Activated CD4-positive, alpha-beta memory T cell treated with anti-CD3 and anti-CD28 coated beads, Interleukin-2, amount 10 ng/mL, durations not matched to agents 7 days and 5 days (primary cell): ENCODE measurements at regions of chr3 and their contacts with region 1.

Region 1: GRCh38 chr3:123723522-123724168 is 138.8 kb upstream of the HACD2 start:
- DNase-seq: peak; percentile 54
- H3K4me3 Mint-ChIP-seq: no peak overlapping the region
- H3K27ac Mint-ChIP-seq: no peak overlapping the region
- H3K4me1 Mint-ChIP-seq: no peaks in the 10 kb centered on the region
- H3K27me3 Mint-ChIP-seq: peaks cover 14% of the 10 kb centered on the region

Region 2: DNA sequence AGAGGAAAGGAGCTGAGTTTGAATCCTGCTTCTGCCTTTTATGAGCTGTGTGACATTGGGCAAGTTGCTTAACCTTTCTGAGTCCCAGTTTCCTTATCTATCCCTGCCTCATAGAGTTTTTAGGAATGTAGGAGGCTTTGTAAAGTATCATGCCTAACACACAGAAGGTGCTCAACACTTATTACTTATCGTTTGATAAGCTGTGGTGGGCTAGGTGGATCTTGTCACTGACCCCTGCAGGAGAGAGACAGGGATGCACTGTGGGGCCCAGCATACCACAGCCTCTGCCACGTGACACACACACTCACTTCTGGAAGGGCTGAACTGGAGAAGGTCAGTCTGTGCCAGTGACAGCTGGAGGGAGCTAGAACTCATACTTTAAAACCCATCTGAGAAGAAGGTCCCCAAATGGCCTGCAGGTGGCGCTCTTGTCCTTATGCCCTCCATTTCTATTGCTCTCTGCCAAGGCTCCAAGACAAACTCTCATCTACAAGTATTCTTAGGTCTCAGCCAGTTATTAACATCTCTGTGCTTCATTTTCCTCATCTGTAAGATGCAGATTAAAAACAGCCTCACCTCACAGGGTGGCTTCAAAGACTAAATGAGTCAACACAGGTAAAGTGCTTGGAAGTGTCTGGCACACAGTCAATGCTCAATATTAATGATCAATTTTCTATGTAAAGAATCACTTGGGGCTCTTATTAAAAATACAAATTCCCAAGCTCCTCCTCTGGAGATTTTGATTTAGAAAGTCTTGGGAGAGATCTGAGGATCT is 81.3 kb before region 1 on chr3:
- CTCF ChIA-PET with region 1: interaction called, 23 read pairs
- POLR2A ChIA-PET with region 1: no interaction called
- DNase-seq: peak; percentile 69
- H3K4me3 Mint-ChIP-seq: no peak overlapping the region
- H3K27ac Mint-ChIP-seq: no peak overlapping the region
- H3K4me1 Mint-ChIP-seq: no peaks in the 10 kb centered on the region
- H3K27me3 Mint-ChIP-seq: peaks cover 3% of the 10 kb centered on the region

Region 3: GRCh38 chr3:123652346-123652984 is 71.2 kb before region 1 on chr3:
- CTCF ChIA-PET with region 1: interaction called, 11 read pairs
- POLR2A ChIA-PET with region 1: no interaction called
- DNase-seq: peak; percentile 28
- H3K4me3 Mint-ChIP-seq: no peak overlapping the region
- H3K27ac Mint-ChIP-seq: no peak overlapping the region
- H3K4me1 Mint-ChIP-seq: no peaks in the 10 kb centered on the region
- H3K27me3 Mint-ChIP-seq: no peaks in the 10 kb centered on the region

Region 4: DNA sequence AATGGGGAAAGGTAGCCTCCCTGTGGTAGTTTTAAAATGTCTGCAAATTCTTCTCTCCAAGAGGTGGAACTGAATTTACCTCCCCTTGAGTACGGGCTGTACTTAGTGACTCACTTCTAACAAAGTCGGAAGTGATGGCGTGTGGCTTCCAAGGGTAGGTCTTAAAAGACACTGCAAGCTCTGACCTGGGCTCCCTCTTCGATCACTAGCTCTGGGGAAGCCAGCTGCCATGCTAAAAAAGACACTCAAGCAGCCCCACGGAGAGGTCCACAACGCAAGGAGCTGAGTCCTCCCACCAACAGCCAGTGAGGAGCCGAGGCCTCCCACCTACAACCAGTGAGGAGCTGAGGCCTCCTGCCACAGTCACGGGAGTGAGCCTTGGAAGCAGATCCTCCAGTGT is 16.8 kb before region 1 on chr3:
- CTCF ChIA-PET with region 1: interaction called, 11 read pairs
- POLR2A ChIA-PET with region 1: no interaction called
- DNase-seq: no peak
- H3K4me3 Mint-ChIP-seq: no peak overlapping the region
- H3K27ac Mint-ChIP-seq: no peak overlapping the region
- H3K4me1 Mint-ChIP-seq: no peaks in the 10 kb centered on the region
- H3K27me3 Mint-ChIP-seq: peaks cover 2% of the 10 kb centered on the region